B cell (primary cell): ENCODE measurements at regions of chr11 and their contacts with region 1.

Region 1: DNA sequence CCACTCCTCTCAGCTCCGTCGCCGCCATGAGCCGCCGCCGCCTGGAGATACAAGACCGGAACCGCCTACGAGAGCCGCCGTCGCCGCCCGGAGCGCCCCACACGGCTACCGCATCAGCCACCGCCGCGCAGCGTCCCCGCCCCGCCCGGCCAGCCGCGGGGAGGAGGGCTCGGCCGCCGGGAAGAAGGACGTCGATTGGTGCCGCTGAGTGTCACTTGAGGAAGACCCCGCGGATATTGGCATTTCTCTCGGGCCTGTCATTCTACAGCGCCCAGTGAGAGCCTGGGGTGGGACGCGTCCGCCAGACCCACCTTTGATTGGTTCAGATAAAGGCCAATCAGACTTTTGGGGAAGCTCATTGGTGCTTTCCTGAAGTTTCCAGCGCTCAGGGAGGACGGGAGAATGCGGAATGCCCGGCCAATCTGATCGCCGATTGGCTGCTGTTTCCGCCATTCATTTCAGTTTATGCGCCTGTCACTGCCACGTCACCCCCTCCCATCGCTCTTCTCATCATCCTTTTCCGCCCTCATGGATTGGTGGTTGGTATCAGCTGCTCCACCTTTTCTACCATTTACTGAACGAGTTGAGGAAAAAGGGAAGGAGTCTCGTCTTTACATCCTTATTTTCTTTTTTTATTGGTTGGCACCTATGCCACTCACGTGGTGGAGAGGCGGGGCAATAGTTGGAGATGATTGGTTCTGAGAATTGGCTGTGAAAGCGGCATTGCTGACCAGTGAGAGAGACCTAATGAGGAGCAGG is at the start of gene OSBP:
- DNase-seq: peak; percentile 100
- ATAC-seq: peak; percentile 76
- H3K4me3 ChIP-seq: peak within 1 kb of the TSS; percentile 47 to 86 (median 77)
- H3K4me3 Mint-ChIP-seq: peak within 1 kb of the TSS; percentile 89
- H3K27ac ChIP-seq: peak within 1 kb of the TSS; percentile 92 to 97
- H3K27ac Mint-ChIP-seq: peak within 1 kb of the TSS; percentile 92
- H3K4me1 ChIP-seq: peaks cover 20% of the 10 kb centered on the region in 2 donors
- H3K4me1 Mint-ChIP-seq: peaks cover 43% of the 10 kb centered on the region
- H3K27me3 ChIP-seq: no peaks in the 10 kb centered on the region
- H3K27me3 Mint-ChIP-seq: no peaks in the 10 kb centered on the region
- CTCF ChIP-seq: no peak
- total RNA-seq, gene OSBP: 40.2 and 42.5 TPM in 2 replicates

Region 2: GRCh38 chr11:59142530-59143507 is 473.0 kb before region 1 on chr11 and contains the start of gene FAM111A:
- CTCF ChIA-PET with region 1: no interaction called
- POLR2A ChIA-PET with region 1: no interaction called
- intact Hi-C with region 1: loop called (anchors 2 kb)
- DNase-seq: peak; percentile 91
- ATAC-seq: peak; percentile 74
- H3K4me3 ChIP-seq: peak within 1 kb of the TSS; percentile 82 to 94 (median 89)
- H3K4me3 Mint-ChIP-seq: peak within 1 kb of the TSS; percentile 97
- H3K27ac ChIP-seq: peak within 1 kb of the TSS; percentile 88 to 90
- H3K27ac Mint-ChIP-seq: peak within 1 kb of the TSS; percentile 87
- H3K4me1 ChIP-seq: peaks cover 40 to 45% of the 10 kb centered on the region in 2 donors
- H3K4me1 Mint-ChIP-seq: peaks cover 68% of the 10 kb centered on the region
- H3K27me3 ChIP-seq: no peaks in the 10 kb centered on the region
- H3K27me3 Mint-ChIP-seq: no peaks in the 10 kb centered on the region
- CTCF ChIP-seq: no peak
- total RNA-seq, gene FAM111A: 120 and 126 TPM in 2 replicates

Region 3: GRCh38 chr11:59550368-59550841 is 65.4 kb before region 1 on chr11:
- CTCF ChIA-PET with region 1: interaction called, 4 read pairs
- POLR2A ChIA-PET with region 1: interaction called, 3 read pairs
- intact Hi-C with region 1: loop called (anchors 1 kb)
- DNase-seq: peak; percentile 94
- ATAC-seq: peak; percentile 90
- H3K4me3 ChIP-seq: peak overlapping the region; percentile 46 to 87 (median 76)
- H3K4me3 Mint-ChIP-seq: peak overlapping the region; percentile 88
- H3K27ac ChIP-seq: peak overlapping the region; percentile 35 to 54
- H3K27ac Mint-ChIP-seq: peak overlapping the region; percentile 92
- H3K4me1 ChIP-seq: peaks cover 9 to 17% of the 10 kb centered on the region in 2 donors
- H3K4me1 Mint-ChIP-seq: peaks cover 29% of the 10 kb centered on the region
- H3K27me3 ChIP-seq: no peaks in the 10 kb centered on the region
- H3K27me3 Mint-ChIP-seq: no peaks in the 10 kb centered on the region
- CTCF ChIP-seq: peak; percentile 68

Region 4: DNA sequence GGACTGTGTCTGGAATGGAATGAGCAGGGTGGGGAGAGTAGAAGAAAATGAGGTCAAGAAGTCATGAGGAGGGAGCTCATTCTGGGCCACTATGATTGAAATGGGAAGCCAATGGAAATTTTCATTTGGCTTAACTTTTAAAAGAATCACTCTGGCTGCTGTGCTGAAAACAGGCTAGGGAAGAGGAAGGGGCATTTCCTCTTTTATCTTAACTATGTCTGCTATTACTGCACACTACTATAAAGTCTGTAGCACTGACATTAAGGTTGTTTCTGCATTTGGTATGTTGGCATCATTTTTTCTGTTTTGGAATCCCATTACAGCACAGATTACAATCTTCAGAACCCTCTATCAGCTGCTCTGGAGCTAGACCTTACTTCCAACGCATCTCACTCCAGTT is 44.8 kb after region 1 on chr11:
- CTCF ChIA-PET with region 1: interaction called, 3 read pairs
- POLR2A ChIA-PET with region 1: no interaction called
- intact Hi-C with region 1: loop called (anchors 2 kb)
- DNase-seq: peak; percentile 30
- ATAC-seq: peak; percentile 60
- H3K4me3 ChIP-seq: peak overlapping the region in 1 of 5 experiments; percentile 13
- H3K4me3 Mint-ChIP-seq: peak overlapping the region; percentile 42
- H3K27ac ChIP-seq: peak overlapping the region; percentile 38 to 70
- H3K27ac Mint-ChIP-seq: peak overlapping the region; percentile 33
- H3K4me1 ChIP-seq: peaks cover 18 to 20% of the 10 kb centered on the region in 2 donors
- H3K4me1 Mint-ChIP-seq: peaks cover 29% of the 10 kb centered on the region
- H3K27me3 ChIP-seq: no peaks in the 10 kb centered on the region
- H3K27me3 Mint-ChIP-seq: no peaks in the 10 kb centered on the region
- CTCF ChIP-seq: no peak

Region 5: DNA sequence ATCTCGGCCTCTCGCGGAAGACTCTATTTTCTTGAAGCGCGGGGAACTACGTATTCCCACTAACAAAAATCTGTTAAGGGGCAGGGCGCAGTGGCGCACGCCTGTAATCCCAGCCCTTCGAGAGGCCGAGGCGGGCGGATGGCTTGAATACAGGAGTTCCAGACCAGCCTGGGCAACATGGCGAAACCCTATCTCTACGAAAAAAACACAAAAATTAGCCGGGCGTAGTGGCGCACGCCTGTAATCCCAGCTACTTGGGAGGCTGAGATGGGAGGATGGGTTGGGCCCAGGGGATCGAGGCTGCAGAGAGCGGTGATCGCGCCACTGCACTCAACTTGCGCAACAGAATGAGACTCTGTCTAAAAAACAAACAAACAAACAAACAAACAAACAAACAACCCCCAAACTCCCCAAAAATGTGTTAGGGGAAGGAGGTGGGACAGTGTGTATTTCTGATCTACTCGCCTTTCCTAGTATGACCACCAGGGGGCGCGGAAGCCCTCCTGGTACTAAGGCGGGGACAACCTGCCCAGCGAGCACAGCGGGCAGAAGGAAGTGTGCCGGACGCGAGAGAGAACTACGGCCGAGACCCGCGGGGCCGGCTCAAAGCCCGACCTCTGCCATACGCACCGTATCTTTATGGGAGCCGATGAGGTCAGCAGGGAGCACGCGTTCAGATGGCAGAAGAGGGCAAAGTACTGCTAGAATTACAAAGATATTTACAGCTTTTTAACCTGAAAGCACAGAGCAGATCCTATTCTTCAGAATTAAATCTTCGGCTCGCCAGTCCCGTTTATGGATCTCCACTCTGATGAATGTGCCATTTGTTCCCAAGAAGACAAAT is 138.1 kb after region 1 on chr11:
- CTCF ChIA-PET with region 1: no interaction called
- POLR2A ChIA-PET with region 1: no interaction called
- intact Hi-C with region 1: loop called (anchors 1 kb)
- DNase-seq: peak; percentile 89
- ATAC-seq: peak; percentile 73
- H3K4me3 ChIP-seq: peak overlapping the region; percentile 72 to 97 (median 80)
- H3K4me3 Mint-ChIP-seq: peak overlapping the region; percentile 94
- H3K27ac ChIP-seq: no peak overlapping the region
- H3K27ac Mint-ChIP-seq: peak overlapping the region; percentile 84
- H3K4me1 ChIP-seq: peaks cover 14 to 26% of the 10 kb centered on the region in 2 donors
- H3K4me1 Mint-ChIP-seq: peaks cover 24% of the 10 kb centered on the region
- H3K27me3 ChIP-seq: peaks cover 0 to 5% (median 0%) of the 10 kb centered on the region in 4 experiments
- H3K27me3 Mint-ChIP-seq: peaks cover 10% of the 10 kb centered on the region
- CTCF ChIP-seq: peak; percentile 96

Region 6: DNA sequence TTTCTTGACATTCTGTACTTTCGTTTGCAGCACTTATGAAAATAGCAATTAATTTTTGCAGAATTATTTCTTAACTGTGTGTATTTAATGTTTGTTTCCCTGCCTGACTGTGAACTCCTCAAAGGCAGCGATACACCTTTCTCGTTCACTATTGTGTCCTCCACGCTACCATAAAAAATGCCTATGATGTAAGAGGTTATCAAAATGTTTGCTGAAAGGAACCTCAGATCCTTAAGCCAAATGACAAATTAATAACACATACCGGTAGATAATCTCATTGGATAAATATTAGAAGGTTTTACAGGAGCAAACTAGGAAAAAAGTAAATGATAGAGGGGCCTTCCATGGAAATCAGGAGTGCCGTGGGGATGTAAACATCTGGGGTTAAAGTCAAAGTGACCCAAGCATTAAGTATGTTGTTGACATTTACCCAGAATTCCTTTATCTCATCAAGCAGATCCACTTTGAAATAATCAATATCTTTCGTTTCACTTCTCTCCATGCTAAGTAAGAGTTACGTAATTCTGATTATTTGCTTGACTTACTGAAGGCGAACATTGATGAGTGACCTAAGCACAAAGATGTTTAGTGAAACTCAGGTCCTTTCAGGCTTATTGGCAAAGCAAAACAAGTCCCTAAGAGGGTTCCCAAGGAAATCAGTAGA is 260.2 kb after region 1 on chr11:
- CTCF ChIA-PET with region 1: no interaction called
- POLR2A ChIA-PET with region 1: no interaction called
- intact Hi-C with region 1: no loop called
- DNase-seq: no peak
- ATAC-seq: no peak
- H3K4me3 ChIP-seq: no peak overlapping the region
- H3K4me3 Mint-ChIP-seq: no peak overlapping the region
- H3K27ac ChIP-seq: no peak overlapping the region
- H3K27ac Mint-ChIP-seq: no peak overlapping the region
- H3K4me1 ChIP-seq: no peaks in the 10 kb centered on the region
- H3K4me1 Mint-ChIP-seq: no peaks in the 10 kb centered on the region
- H3K27me3 ChIP-seq: no peaks in the 10 kb centered on the region
- H3K27me3 Mint-ChIP-seq: peaks cover 21% of the 10 kb centered on the region
- CTCF ChIP-seq: no peak